Gastrocnemius medialis (tissue), 4 donors: ENCODE measurements at regions of chr16 and their contacts with region 1.

Region 1: GRCh38 chr16:30628627-30629540 is 18.7 kb upstream of the ZNF689 start:
- DNase-seq: peak; percentile 54 to 73
- ATAC-seq: peak; percentile 88 to 95
- H3K4me3 ChIP-seq: peak overlapping the region; percentile 30 to 41 (median 34)
- H3K27ac ChIP-seq: peak overlapping the region; percentile 39 to 71 (median 61)
- H3K4me1 ChIP-seq: no peaks in the 10 kb centered on the region
- H3K27me3 ChIP-seq: no peaks in the 10 kb centered on the region
- CTCF ChIP-seq: peak; percentile 80 to 91 (median 86)
- POLR2A ChIP-seq: no peak

Region 2: GRCh38 chr16:30534368-30535105 is 94.3 kb before region 1 on chr16 and contains the start of gene ZNF747:
- in situ Hi-C with region 1: no loop called
- intact Hi-C with region 1: loop called (anchors 1 kb)
- DNase-seq: peak; percentile 93 to 95
- ATAC-seq: peak; percentile 87 to 91
- H3K4me3 ChIP-seq: peak within 1 kb of the TSS; percentile 65 to 88 (median 82)
- H3K27ac ChIP-seq: peak within 1 kb of the TSS; percentile 90 to 96 (median 94)
- H3K4me1 ChIP-seq: peaks cover 23 to 24% of the 10 kb centered on the region in 2 donors
- H3K27me3 ChIP-seq: no peaks in the 10 kb centered on the region
- CTCF ChIP-seq: peak in 1 of 5 experiments; percentile 6
- POLR2A ChIP-seq: peak; percentile 71 to 74
- total RNA-seq, gene ZNF747: 8.6 to 17.5 (median 13.1) TPM

Region 3: DNA sequence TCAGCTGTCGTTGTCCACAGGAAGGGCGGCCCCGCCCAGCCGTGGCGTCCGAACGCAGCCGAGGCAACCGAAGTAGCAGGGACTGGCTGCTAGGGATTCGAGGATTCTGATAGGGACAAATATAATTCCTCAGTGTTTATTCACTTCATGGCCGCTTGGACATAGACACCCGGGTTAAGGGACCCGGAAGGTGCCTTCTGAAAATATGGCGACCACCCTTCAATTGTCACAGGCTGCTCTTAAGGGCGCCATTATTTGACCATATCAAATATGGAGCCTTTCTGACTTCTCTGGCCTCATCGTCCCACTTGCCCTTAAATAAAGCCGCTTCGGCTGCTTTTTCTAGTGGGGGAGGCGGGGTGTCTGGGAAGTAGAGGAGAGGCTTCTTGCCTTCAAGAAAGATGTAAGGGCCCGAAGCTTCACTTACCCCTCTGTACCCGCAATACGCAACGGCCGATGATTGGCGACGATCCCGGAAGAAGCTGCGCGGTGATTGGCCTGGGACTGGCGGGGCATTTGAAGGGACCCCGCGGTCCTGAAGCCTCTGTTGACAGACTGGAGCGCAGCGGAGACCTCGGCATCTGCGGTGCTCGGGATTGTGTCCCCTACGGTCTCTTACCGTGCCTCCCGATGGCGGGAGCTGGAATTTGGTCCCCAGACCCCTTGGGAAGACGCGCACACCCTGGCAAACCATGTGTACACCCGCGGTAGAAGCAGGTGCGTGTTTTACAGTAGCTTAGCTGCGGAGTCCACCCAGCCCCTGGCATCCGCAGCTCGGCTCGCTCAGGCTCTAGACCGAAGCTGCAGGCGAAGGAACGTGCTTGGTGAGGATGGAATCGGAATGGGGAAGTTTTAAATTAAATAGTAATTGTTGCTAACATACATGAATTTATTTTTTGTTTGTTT is 56.9 kb before region 1 on chr16 and contains the start of gene ZNF688:
- in situ Hi-C with region 1: loop called in 1 of 4 experiments (anchors 10 kb)
- intact Hi-C with region 1: loop called (anchors 1 kb)
- DNase-seq: peak; percentile 95 to 96
- ATAC-seq: peak; percentile 96
- H3K4me3 ChIP-seq: peak within 1 kb of the TSS; percentile 75 to 96 (median 86)
- H3K27ac ChIP-seq: peak within 1 kb of the TSS; percentile 84 to 99 (median 98)
- H3K4me1 ChIP-seq: peaks cover 21 to 24% of the 10 kb centered on the region in 2 donors
- H3K27me3 ChIP-seq: no peaks in the 10 kb centered on the region
- CTCF ChIP-seq: no peak
- POLR2A ChIP-seq: peak in 1 of 2 donors; percentile 68
- total RNA-seq, gene ZNF688: 11.0 to 38.2 (median 18.5) TPM

Region 4: DNA sequence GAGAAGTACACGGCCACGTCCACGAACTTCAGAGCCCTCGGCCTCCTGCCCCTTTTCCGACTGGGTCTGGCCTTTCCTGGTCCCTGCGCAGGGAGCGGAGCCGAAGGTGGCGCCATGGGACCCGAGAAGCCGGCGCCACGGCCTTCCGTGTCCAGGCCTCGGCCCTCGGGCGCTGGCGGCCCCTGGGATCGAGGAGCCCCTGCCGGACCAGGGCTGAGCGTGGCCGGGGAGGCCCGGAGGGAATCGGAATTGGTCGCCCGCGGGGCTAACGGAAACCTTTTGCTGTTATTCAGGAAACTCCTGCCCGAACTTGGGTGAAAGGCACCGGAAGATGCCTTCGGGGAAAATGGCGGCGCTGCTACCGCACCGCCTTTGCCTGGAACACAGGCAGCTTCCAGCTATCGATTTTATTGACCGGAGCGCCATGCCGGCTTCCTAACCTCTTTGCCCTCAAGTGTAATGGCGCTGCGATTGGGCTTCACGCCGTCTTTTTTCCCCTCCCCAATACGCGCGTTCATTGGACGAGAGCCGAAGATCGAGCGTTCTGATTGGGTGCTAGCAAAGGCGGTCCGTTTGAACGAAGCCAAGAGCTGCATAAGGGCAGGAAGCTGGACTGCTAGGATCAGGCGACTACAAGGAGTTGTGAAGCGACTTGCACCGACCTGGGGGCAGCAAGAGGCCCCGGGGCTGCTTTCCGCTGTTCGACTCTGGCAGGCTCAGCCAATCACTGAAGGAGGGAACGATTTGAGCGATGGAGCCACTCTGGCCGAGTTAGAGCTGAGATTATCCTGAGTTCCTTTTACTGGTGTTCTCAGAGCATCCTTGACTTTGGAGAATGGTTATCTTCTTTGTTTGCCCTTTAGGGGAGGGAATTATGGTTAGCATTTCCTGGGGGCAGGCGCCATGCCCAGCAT is 18.7 kb before region 1 on chr16 and contains the start of gene ZNF689:
- in situ Hi-C with region 1: no loop called
- intact Hi-C with region 1: loop called (anchors 2 kb)
- DNase-seq: peak; percentile 94
- ATAC-seq: peak; percentile 100
- H3K4me3 ChIP-seq: peak within 1 kb of the TSS; percentile 80 to 100 (median 98)
- H3K27ac ChIP-seq: peak within 1 kb of the TSS; percentile 91 to 99 (median 94)
- H3K4me1 ChIP-seq: no peaks in the 10 kb centered on the region
- H3K27me3 ChIP-seq: no peaks in the 10 kb centered on the region
- CTCF ChIP-seq: no peak
- POLR2A ChIP-seq: peak in 1 of 2 donors; percentile 45
- total RNA-seq, gene ZNF689: 2.9 to 6.3 (median 6.1) TPM

Region 5: DNA sequence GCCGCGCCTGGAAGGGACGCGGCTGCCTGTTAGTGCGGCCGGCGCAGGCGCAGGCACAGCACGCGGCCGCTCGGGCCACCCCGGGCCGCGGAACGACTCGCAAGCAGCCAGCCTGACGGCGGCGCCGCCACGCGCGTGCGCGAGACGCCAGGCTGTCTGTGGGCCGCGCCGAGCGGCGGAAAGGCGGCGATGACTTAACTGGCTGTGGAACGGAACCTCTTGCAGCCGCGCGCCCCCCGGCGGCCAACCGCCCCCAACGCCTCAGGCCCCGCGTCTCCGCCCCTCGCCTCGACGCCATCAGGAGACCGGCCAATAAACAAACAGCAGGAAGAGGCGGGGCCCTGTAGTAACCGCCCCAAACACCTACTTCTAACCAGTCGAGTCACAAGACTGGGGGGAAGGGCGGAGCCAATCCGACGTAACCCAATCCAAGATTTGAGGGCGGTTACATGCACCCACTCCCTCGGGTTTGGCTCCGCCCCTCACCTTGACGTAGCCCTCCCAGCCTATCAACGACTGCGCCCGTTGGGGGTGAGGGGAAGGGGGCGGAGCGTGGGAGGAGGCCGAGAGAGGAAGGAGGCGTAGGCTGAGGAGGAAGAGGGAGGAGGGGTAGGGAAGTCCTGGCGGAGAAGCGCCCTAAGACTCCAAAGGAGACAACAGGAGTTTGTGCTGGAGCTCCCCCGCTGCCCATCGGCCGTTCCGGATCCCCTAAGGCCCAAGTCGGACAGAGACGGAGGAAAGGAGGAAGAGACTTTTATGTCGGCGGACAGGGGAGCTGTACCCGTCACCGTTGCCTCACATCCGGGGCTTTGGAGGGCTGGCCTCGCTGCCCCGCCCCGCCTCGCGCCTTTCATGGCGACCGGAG is 29.2 kb after region 1 on chr16 and contains the start of gene FBRS:
- in situ Hi-C with region 1: no loop called
- intact Hi-C with region 1: loop called (anchors 2 kb)
- DNase-seq: peak; percentile 100
- ATAC-seq: peak; percentile 83 to 88
- H3K4me3 ChIP-seq: peak within 1 kb of the TSS; percentile 61 to 89 (median 79)
- H3K27ac ChIP-seq: peak within 1 kb of the TSS; percentile 93 to 99 (median 96)
- H3K4me1 ChIP-seq: peaks cover 32 to 33% of the 10 kb centered on the region in 2 donors
- H3K27me3 ChIP-seq: no peaks in the 10 kb centered on the region
- CTCF ChIP-seq: peak; percentile 64 to 90 (median 83)
- POLR2A ChIP-seq: peak; percentile 83 to 88
- total RNA-seq, gene FBRS: 22.0 to 34.8 (median 28.0) TPM

Region 6: DNA sequence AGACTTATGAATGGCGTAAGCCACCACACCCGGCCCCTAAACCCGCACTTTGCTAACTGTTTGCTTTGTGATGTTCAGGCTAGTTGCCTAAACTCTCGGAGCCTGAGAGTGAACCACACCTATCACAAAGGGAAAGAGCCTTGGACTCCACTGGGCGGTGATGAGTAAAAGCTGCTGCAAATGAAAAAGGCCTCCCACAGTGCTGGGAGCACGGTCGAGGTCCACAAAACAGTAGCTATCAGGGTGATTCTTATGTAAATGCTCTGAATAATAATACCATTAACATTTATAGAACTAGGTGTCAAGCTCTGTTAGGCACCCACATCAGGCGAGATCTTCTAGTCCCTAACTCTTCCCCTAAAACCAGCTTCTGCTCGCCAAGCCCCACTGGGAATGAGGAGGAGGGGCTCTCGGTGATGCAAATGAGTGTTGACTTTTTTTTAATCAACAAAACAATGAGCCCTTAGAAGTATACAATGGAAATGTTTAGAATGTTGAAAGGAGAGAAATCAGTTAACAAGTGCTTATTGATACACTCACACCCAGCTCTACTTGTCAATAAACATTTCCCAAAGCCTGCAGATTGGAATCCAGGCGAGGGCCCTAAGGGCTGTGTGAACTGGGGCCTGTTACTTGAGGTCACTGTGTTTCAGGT is 49.2 kb after region 1 on chr16:
- in situ Hi-C with region 1: no loop called
- intact Hi-C with region 1: no loop called
- DNase-seq: no peak
- ATAC-seq: no peak
- H3K4me3 ChIP-seq: no peak overlapping the region
- H3K27ac ChIP-seq: no peak overlapping the region
- H3K4me1 ChIP-seq: no peaks in the 10 kb centered on the region
- H3K27me3 ChIP-seq: no peaks in the 10 kb centered on the region
- CTCF ChIP-seq: no peak
- POLR2A ChIP-seq: no peak

Region 7: DNA sequence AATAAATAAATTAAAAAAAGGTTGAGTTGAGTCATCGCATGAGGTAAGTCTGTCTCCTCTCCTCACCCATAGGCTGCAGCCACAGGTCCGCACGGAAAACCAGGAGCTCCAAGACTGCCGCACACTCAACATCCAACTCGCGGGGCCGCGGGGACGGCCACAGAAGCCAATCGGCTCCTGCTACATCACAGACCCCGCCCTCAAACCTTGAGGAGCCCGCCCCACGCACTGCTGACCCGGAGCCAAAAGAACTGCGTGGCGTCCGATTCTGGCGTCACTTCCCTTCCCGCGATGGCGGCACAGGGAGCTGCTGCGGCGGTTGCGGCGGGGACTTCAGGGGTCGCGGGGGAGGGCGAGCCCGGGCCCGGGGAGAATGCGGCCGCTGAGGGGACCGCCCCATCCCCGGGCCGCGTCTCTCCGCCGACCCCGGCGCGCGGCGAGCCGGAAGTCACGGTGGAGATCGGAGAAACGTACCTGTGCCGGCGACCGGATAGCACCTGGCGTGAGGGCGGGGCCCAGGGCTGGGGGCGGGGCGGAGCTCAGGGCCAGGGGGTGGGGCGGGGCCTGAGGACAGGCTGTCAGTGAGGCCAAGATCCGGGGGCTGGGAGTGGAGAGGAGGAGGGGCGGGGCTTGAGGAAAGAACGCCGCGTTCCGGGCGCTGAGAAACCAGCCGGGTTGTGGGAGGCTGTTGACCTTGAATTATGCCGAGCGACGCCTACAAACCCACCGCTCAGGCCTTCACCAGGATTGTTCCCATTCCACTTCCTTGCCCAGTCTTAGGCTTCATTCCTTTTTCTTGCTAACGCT is 488.7 kb after region 1 on chr16 and contains the start of gene KAT8:
- in situ Hi-C with region 1: no loop called
- intact Hi-C with region 1: no loop called
- DNase-seq: peak; percentile 98
- ATAC-seq: peak; percentile 82 to 92
- H3K4me3 ChIP-seq: peak within 1 kb of the TSS; percentile 69 to 82 (median 71)
- H3K27ac ChIP-seq: peak within 1 kb of the TSS; percentile 88 to 100 (median 96)
- H3K4me1 ChIP-seq: peaks cover 32% of the 10 kb centered on the region in 2 donors
- H3K27me3 ChIP-seq: no peaks in the 10 kb centered on the region
- CTCF ChIP-seq: no peak
- POLR2A ChIP-seq: peak; percentile 90 to 93
- total RNA-seq, gene KAT8: 44.3 to 102 (median 54.3) TPM

Region 8: DNA sequence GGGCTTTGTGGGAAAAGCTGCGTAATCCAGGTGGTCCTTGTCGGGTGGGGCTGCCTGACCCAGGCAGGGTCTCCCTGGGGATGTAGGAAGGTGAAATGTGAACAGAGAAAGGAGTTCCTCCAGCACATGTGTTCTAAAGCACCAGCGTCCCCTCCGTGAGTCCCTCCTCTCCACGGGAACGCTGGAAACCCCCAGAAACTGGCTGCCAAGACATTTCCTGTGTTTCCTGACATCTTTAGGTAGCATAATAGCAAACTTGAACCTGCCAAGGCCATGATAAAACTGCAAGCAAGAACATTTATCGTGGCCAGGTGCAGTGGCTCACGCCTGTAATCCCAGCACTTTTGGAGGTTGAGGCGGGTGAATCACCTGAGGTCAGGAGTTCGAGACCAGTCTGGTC is 600.6 kb after region 1 on chr16:
- in situ Hi-C with region 1: no loop called
- intact Hi-C with region 1: no loop called
- DNase-seq: no peak
- ATAC-seq: no peak
- H3K4me3 ChIP-seq: no peak overlapping the region
- H3K27ac ChIP-seq: no peak overlapping the region
- H3K4me1 ChIP-seq: peaks cover 0 to 12% of the 10 kb centered on the region in 2 donors
- H3K27me3 ChIP-seq: no peaks in the 10 kb centered on the region
- CTCF ChIP-seq: no peak
- POLR2A ChIP-seq: no peak